H1 (cell line): ENCODE measurements at regions of chr6 and their contacts with region 1.

Region 1: GRCh38 chr6:137390334-137390733 is 103.9 kb downstream of the OLIG3 start:
- DNase-seq: no peak
- H3K4me3 ChIP-seq: no peak overlapping the region
- H3K27ac ChIP-seq: no peak overlapping the region
- H3K4me1 ChIP-seq: no peaks in the 10 kb centered on the region
- H3K27me3 ChIP-seq: peaks cover 8 to 37% (median 20%) of the 10 kb centered on the region in 4 experiments
- CTCF ChIP-seq: no peak
- EP300 ChIP-seq: no peak
- POLR2A ChIP-seq: no peak
- RAD21 ChIP-seq: no peak

Region 2: GRCh38 chr6:137371634-137372016 is 18.7 kb before region 1 on chr6:
- CTCF ChIA-PET with region 1: interaction called, 13 read pairs
- POLR2A ChIA-PET with region 1: no interaction called
- DNase-seq: no peak
- H3K4me3 ChIP-seq: no peak overlapping the region
- H3K27ac ChIP-seq: no peak overlapping the region
- H3K4me1 ChIP-seq: peaks cover 0 to 10% (median 1%) of the 10 kb centered on the region in 4 experiments; a peak in 3 of 7 replicates
- H3K27me3 ChIP-seq: no peaks in the 10 kb centered on the region
- CTCF ChIP-seq: no peak
- EP300 ChIP-seq: no peak
- POLR2A ChIP-seq: no peak
- RAD21 ChIP-seq: no peak